ENCODE measurements at regions of chr6 and their contacts with region 1.

Region 1: GRCh38 chr6:120604510-120604909 is 729.8 kb downstream of the TBC1D32 start:
- DNase-seq: no peak
- H3K4me3 ChIP-seq: no peak overlapping the region
- H3K27ac ChIP-seq: no peak overlapping the region
- H3K4me1 ChIP-seq: peaks cover 0 to 7% (median 3%) of the 10 kb centered on the region in 4 donors
- H3K27me3 ChIP-seq: no peaks in the 10 kb centered on the region
- CTCF ChIP-seq: no peak

Region 2: DNA sequence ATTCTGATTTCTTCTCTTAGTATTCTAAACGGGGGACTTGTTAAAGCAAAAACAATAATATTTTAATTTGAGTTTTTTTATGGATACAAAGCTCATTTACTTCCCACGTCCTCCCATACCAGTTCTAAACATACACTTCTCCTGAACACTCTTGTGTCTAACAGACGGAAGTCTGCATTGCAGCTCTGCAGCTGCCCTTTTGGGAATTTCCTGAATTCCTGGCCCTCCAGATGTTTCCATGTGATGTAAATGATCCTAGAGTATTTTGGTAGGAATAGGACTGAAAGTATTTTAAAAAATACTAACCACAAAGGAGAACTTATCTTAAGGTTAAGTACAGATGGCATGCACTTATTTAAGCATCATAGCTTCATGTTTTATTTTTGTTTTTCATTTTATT is 156.9 kb before region 1 on chr6:
- intact Hi-C with region 1: no loop called
- DNase-seq: no peak
- H3K4me3 ChIP-seq: no peak overlapping the region
- H3K27ac ChIP-seq: no peak overlapping the region
- H3K4me1 ChIP-seq: no peaks in the 10 kb centered on the region
- H3K27me3 ChIP-seq: no peaks in the 10 kb centered on the region
- CTCF ChIP-seq: no peak

Region 3: DNA sequence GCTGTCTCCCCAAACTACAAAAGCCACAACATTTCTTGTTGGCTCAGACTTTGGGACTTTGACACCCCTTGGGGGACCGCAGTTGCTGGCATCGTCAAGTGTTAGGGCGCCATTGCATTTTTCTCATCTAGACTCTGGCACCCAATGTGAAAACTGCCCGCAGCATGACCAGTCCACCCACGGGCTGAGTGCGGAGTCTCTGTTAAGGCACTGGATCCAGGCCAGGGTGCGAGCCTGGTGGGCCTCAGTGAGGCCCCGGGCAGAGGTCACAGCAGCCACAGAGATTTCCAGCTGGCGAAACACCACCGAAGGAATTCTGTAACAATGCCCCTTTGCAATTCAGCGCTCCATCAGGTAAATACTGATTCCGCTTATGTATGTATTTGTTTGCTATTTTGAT is 132.8 kb before region 1 on chr6:
- intact Hi-C with region 1: no loop called
- DNase-seq: no peak
- H3K4me3 ChIP-seq: no peak overlapping the region
- H3K27ac ChIP-seq: no peak overlapping the region
- H3K4me1 ChIP-seq: no peaks in the 10 kb centered on the region
- H3K27me3 ChIP-seq: no peaks in the 10 kb centered on the region
- CTCF ChIP-seq: no peak

Region 4: DNA sequence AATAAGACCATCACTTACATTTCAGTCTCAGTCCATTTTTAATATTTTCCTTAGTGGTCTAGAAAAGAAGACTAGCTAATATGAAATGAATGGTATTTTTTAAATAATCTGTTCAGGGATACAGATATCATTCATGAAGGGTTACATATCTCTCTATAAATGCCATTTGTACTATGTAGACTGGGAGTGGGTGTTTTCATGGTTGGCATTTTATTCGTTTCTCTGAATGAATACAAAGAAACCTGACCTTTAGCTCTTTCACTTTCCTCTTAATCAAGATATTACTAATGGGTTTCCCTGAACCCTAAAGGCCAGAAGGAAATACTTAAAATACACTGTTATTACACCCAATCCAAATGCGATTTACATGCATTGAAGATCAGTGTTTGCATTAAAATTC is 59.2 kb before region 1 on chr6:
- intact Hi-C with region 1: no loop called
- DNase-seq: no peak
- H3K4me3 ChIP-seq: no peak overlapping the region
- H3K27ac ChIP-seq: no peak overlapping the region
- H3K4me1 ChIP-seq: no peaks in the 10 kb centered on the region
- H3K27me3 ChIP-seq: no peaks in the 10 kb centered on the region
- CTCF ChIP-seq: no peak

Region 5: GRCh38 chr6:121810158-121811032 is 1205.9 kb after region 1 on chr6:
- intact Hi-C with region 1: no loop called
- DNase-seq: no peak
- H3K4me3 ChIP-seq: no peak overlapping the region
- H3K27ac ChIP-seq: no peak overlapping the region
- H3K4me1 ChIP-seq: no peaks in the 10 kb centered on the region
- H3K27me3 ChIP-seq: no peaks in the 10 kb centered on the region
- CTCF ChIP-seq: no peak

Region 6: GRCh38 chr6:122604676-122605075 is 2000.2 kb after region 1 on chr6:
- intact Hi-C with region 1: loop called (anchors 5 kb)
- DNase-seq: no peak
- H3K4me3 ChIP-seq: no peak overlapping the region
- H3K27ac ChIP-seq: no peak overlapping the region
- H3K4me1 ChIP-seq: peaks cover 0 to 2% (median 0%) of the 10 kb centered on the region in 4 donors
- H3K27me3 ChIP-seq: no peaks in the 10 kb centered on the region
- CTCF ChIP-seq: no peak